ENCODE measurements at regions of chr4 and their contacts with region 1.

Region 1: GRCh38 chr4:30434656-30435055 is 285.5 kb upstream of the PCDH7 start:
- DNase-seq: no peak
- ATAC-seq: no peak
- H3K4me3 ChIP-seq: no peak overlapping the region
- H3K27ac ChIP-seq: no peak overlapping the region
- H3K4me1 ChIP-seq: no peaks in the 10 kb centered on the region
- H3K27me3 ChIP-seq: no peaks in the 10 kb centered on the region
- CTCF ChIP-seq: no peak

Region 2: DNA sequence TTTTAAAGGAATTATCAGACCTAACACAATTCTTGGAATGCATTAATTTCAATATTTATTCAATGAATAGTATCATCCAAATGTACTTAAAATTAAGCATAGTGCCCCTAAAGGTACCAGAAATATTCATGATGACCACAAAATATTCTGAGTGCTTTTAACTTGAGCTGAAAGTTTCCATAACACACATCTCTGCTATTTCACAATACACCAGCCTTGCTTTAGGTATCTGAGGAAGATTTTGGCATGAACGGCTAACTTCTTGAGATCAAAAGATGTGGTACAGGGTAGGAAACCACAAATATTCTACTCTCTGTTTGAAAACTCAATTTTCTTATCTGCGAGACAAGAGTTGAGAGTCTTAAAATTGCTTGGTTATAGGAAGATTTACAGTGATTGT is 252.7 kb before region 1 on chr4:
- intact Hi-C with region 1: no loop called
- DNase-seq: no peak
- ATAC-seq: no peak
- H3K4me3 ChIP-seq: no peak overlapping the region
- H3K27ac ChIP-seq: no peak overlapping the region
- H3K4me1 ChIP-seq: no peaks in the 10 kb centered on the region
- H3K27me3 ChIP-seq: no peaks in the 10 kb centered on the region
- CTCF ChIP-seq: no peak

Region 3: DNA sequence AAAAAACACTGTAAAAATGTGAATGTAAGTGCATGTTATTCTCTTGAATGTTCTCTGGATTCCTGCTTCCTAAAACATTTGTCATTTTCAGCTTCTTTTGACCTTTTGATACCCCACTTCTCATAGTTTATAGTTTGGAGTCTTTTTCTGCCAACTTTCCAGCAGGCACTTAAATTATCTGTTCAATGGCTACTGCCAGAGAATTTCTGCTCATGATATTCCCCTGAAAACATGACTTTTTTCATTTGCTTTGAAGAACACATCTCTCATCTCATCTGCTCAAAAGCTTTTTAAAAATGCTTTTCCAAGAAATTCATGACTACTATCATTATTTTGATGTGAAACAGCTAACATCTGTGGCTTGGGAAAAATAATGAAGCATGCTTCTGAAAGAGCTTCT is 15.8 kb after region 1 on chr4:
- intact Hi-C with region 1: loop called in 1 of 2 experiments (anchors 1 kb)
- DNase-seq: no peak
- ATAC-seq: no peak
- H3K4me3 ChIP-seq: no peak overlapping the region
- H3K27ac ChIP-seq: no peak overlapping the region
- H3K4me1 ChIP-seq: no peaks in the 10 kb centered on the region
- H3K27me3 ChIP-seq: no peaks in the 10 kb centered on the region
- CTCF ChIP-seq: no peak

Measured in psoas muscle (tissue), 8 donors.